ENCODE measurements at regions of chr19 and their contacts with region 1.

Region 1: DNA sequence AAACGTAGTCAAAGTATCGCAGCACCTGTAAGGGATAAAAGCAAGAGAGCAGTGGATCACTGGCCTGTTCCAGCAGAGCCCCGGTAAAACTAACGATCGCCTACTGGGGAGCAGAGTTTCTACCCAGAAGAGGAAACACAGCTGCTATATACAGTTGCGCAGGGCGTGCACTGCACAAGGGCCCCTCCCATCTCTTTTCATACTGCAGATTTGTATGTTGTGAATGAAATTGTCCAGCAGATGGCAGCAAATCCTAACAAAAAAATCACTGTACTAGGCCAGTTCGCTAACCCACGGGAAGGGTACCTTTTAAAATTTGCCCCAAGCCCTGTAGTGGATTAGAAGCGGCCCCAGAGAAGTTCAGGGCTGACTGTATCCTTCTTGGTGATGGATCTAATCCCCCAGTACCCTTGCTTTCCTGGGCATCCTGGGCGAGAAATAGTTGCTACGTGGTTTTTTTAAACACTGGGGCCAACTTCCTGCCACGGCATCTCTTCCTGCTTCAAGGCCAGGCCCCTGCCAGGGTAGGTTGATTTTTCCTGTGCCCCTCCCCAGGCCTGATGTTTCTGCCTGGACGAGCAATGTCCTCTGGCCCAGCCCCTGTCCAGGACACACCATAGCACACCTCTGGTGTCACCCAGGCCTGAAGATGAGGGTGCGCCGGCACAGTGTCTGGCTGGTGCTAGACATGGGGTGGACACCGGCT is 127.0 kb downstream of the IER2 start:
- DNase-seq: peak; percentile 84
- H3K4me3 ChIP-seq: no peak overlapping the region
- H3K27ac ChIP-seq: peak overlapping the region; percentile 40
- H3K4me1 ChIP-seq: peaks cover 7% of the 10 kb centered on the region
- CTCF ChIP-seq: peak; percentile 85

Region 2: DNA sequence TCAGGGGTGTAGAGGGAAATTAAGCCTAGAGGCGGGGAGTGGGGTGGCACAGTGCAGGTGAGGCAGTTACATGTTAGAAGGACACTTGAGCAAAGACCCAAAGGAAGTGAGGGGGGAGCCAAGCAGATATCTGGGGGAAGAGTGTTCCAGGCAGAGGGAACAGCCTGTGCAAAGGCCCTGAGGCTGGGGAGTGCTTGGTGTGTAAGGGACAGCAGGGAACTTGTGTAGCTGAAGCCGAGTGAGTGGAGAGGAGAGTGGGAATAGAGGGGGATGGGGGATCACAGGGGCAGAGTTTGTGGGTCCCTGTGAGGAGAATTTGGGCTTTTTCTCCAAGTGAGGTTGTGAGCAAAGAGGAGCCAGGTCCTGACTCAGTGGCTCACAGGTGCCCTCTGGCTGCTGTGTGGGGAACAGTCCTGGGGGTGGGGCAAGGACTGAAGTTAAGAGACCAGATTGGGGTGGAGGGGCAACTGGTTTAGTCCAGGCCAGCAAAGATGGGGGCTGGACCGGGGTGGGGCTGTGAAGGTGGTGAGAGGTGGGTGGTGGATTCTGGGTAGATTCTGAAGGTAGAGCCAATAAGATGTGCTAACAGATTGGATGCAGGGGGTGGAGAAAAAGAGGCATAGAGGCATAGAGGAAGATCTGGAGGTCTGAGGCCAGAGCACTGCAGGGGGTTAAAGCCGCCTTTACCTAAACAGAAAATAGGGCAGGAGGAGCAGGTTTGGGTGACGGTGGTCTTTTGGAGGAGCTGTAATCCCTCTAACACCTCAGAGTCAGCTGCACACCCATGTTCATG is 153.7 kb after region 1 on chr19:
- CTCF ChIA-PET with region 1: interaction called, 3 read pairs
- POLR2A ChIA-PET with region 1: no interaction called
- intact Hi-C with region 1: loop called (anchors 1 kb)
- DNase-seq: peak; percentile 51
- H3K4me3 ChIP-seq: no peak overlapping the region
- H3K27ac ChIP-seq: no peak overlapping the region
- H3K4me1 ChIP-seq: no peaks in the 10 kb centered on the region
- CTCF ChIP-seq: peak; percentile 81

Region 3: GRCh38 chr19:13588957-13589833 is 311.9 kb after region 1 on chr19:
- CTCF ChIA-PET with region 1: no interaction called
- POLR2A ChIA-PET with region 1: no interaction called
- intact Hi-C with region 1: loop called (anchors 1 kb)
- DNase-seq: peak; percentile 57
- H3K4me3 ChIP-seq: no peak overlapping the region
- H3K27ac ChIP-seq: no peak overlapping the region
- H3K4me1 ChIP-seq: no peaks in the 10 kb centered on the region
- CTCF ChIP-seq: peak; percentile 93

Region 4: GRCh38 chr19:13861732-13862531 is 584.7 kb after region 1 on chr19:
- CTCF ChIA-PET with region 1: no interaction called
- POLR2A ChIA-PET with region 1: no interaction called
- intact Hi-C with region 1: loop called (anchors 5 kb)
- DNase-seq: peak; percentile 76
- H3K4me3 ChIP-seq: peak overlapping the region; percentile 56
- H3K27ac ChIP-seq: no peak overlapping the region
- H3K4me1 ChIP-seq: peaks cover 13% of the 10 kb centered on the region
- CTCF ChIP-seq: peak; percentile 86

Measured in OCI-LY7 (cell line).